B cell (primary cell): ENCODE measurements at regions of chr6 and their contacts with region 1.

Region 1: GRCh38 chr6:109187399-109188114 is 92.2 kb downstream of the CEP57L1 start:
- DNase-seq: peak; percentile 71
- ATAC-seq: peak; percentile 82
- H3K4me3 ChIP-seq: no peak overlapping the region
- H3K4me3 Mint-ChIP-seq: no peak overlapping the region
- H3K27ac ChIP-seq: no peak overlapping the region
- H3K27ac Mint-ChIP-seq: no peak overlapping the region
- H3K4me1 ChIP-seq: peaks cover 8 to 16% of the 10 kb centered on the region in 2 donors
- H3K4me1 Mint-ChIP-seq: peaks cover 9% of the 10 kb centered on the region
- H3K27me3 ChIP-seq: peaks cover 0 to 4% (median 0%) of the 10 kb centered on the region in 4 experiments
- H3K27me3 Mint-ChIP-seq: peaks cover 11% of the 10 kb centered on the region
- CTCF ChIP-seq: peak; percentile 97

Region 2: DNA sequence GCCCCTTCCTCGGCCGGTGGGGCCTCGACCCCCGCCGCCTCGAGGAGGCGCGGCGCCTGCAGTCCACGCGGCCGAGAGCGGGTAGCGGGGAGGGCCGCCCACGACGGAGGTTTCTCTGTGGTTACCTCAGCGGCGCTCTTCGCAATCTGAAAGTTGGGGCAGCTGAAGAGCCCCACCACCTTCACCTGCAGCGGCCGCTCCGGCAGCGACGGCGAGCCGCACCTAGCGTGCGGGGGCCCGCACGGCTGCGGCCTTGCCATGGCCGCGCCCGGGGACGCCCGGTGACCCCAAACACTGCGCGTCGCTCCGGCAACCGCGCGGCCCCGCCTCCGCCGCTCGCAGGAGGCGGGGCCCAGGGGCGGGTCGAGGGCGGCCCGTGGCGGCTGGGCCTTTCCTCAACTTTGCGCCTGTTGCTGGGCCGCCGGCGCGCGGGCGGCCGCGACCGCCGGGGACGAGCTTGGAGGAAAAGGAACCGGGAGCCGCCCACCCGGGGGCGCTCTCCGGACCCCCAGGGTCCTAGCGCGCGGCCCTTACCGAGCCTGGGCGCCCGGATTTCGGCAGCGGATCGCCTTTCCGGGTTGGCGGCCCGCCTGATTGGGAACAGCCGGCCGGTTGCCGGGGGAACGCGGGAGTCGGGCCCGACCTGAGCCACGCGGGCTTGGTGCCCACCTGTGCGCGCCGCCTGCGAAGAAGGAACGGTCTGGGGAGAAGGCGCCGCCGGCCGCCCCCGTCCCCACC is 252.9 kb after region 1 on chr6 and contains the starts of genes PPIL6 and SMPD2:
- CTCF ChIA-PET with region 1: interaction called, 6 read pairs
- POLR2A ChIA-PET with region 1: no interaction called
- intact Hi-C with region 1: loop called (anchors 2 kb)
- DNase-seq: peak; percentile 94
- ATAC-seq: peak; percentile 87
- H3K4me3 ChIP-seq: peak within 1 kb of the TSS; percentile 0 to 93 (median 90)
- H3K4me3 Mint-ChIP-seq: peak within 1 kb of the TSS; percentile 97
- H3K27ac ChIP-seq: peak within 1 kb of the TSS; percentile 79 to 98
- H3K27ac Mint-ChIP-seq: peak within 1 kb of the TSS; percentile 96
- H3K4me1 ChIP-seq: peaks cover 21 to 30% of the 10 kb centered on the region in 2 donors
- H3K4me1 Mint-ChIP-seq: peaks cover 31% of the 10 kb centered on the region
- H3K27me3 ChIP-seq: no peaks in the 10 kb centered on the region
- H3K27me3 Mint-ChIP-seq: no peaks in the 10 kb centered on the region
- CTCF ChIP-seq: no peak
- total RNA-seq, gene PPIL6: 0.53 and 1.8 TPM in 2 replicates
- total RNA-seq, gene SMPD2: 35.7 and 36.4 TPM in 2 replicates

Region 3: DNA sequence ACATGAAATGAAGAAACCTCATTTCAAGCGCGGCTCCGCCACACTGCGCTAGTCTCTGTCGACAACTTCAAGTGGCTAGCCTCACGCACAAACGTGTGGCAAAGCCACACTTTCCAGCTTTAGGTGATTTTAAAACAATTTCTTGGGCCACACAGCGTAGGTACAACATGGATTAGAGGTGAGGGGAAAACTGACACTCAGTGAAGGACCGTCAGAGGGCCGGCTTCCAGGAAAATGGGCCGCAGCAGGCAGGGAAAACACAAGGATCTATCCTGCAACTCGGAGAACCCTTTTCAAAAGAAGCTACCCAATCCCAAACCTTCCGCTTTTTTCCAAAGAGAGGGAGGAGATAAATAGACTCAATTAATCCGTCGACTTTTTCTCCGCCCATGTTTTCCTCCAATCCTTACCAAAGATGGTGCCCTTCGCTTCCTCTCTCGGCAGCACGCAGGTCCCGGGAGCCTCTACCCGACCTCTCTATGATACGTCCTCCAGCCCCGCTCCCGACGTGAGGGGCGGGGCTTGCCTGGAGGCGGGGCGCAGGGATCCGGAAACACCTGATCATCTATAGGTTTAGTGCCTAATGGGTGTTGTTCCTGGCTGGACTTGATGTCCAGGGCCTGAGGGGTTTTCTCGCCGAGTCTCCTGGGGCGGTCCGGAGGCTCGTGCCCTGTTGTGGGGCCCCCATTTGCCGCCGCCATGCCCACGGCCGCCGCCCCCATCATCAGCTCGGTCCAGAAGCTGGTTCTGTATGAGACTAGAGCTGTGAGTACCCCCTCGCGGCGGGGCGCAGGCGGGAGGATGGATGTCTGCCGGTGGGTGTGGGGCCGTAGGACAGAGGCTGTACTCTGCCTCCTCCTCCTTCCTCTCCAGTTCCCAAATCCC is 503.4 kb after region 1 on chr6 and contains the starts of genes AK9 and FIG4:
- CTCF ChIA-PET with region 1: interaction called, 11 read pairs
- POLR2A ChIA-PET with region 1: no interaction called
- intact Hi-C with region 1: loop called (anchors 5 kb)
- DNase-seq: peak; percentile 91
- ATAC-seq: peak; percentile 92
- H3K4me3 ChIP-seq: peak within 1 kb of the TSS; percentile 82 to 99 (median 93)
- H3K4me3 Mint-ChIP-seq: peak within 1 kb of the TSS; percentile 90
- H3K27ac ChIP-seq: peak within 1 kb of the TSS; percentile 77 to 93
- H3K27ac Mint-ChIP-seq: peak within 1 kb of the TSS; percentile 99
- H3K4me1 ChIP-seq: peaks cover 26 to 29% of the 10 kb centered on the region in 2 donors
- H3K4me1 Mint-ChIP-seq: peaks cover 39% of the 10 kb centered on the region
- H3K27me3 ChIP-seq: no peaks in the 10 kb centered on the region
- H3K27me3 Mint-ChIP-seq: no peaks in the 10 kb centered on the region
- CTCF ChIP-seq: peak; percentile 26
- total RNA-seq, gene AK9: 26.5 and 27.1 TPM in 2 replicates
- total RNA-seq, gene FIG4: 31.5 and 32.8 TPM in 2 replicates

Region 4: GRCh38 chr6:110053395-110054240 is 866.1 kb after region 1 on chr6:
- CTCF ChIA-PET with region 1: interaction called, 3 read pairs
- POLR2A ChIA-PET with region 1: no interaction called
- intact Hi-C with region 1: loop called (anchors 1 kb)
- DNase-seq: peak; percentile 53
- ATAC-seq: no peak
- H3K4me3 ChIP-seq: no peak overlapping the region
- H3K4me3 Mint-ChIP-seq: no peak overlapping the region
- H3K27ac ChIP-seq: no peak overlapping the region
- H3K27ac Mint-ChIP-seq: no peak overlapping the region
- H3K4me1 ChIP-seq: peaks cover 0 to 3% of the 10 kb centered on the region in 2 donors
- H3K4me1 Mint-ChIP-seq: no peaks in the 10 kb centered on the region
- H3K27me3 ChIP-seq: no peaks in the 10 kb centered on the region
- H3K27me3 Mint-ChIP-seq: peaks cover 7% of the 10 kb centered on the region
- CTCF ChIP-seq: peak; percentile 57